Activated CD4-positive, alpha-beta T cell treated with anti-CD3 and anti-CD28 coated beads, Interleukin-2, amount 10 ng/mL, durations not matched to agents 7 days and 5 days (primary cell): ENCODE measurements at regions of chr1 and their contacts with region 1.

Region 1: DNA sequence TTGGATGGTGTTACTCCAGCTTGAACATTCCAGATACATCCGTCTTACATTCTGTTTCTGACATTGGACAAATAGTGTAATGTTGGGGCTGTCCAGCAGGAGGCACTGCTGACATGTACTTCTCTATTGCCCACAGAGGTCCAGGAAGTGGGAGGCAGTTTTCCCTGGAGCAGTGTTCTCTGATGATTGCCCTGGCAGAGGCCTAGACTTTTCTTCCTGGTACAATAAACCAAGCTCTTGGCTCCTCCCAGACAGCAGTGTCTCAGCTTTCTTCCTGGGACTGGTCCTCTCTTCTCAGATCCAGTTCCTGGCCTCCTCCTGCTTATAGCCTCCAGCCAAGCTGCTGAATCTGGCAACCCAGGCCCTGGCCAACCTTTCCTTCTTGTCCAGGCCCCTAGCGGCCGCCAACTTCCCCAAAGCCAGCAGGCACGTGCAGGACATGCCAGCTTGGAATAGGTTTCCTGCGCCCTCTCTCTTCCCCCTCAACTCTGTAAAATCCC is 14.9 kb upstream of the IFNLR1 start:
- DNase-seq: peak; percentile 68
- H3K4me3 Mint-ChIP-seq: no peak overlapping the region
- H3K27ac Mint-ChIP-seq: peak overlapping the region; percentile 75
- H3K4me1 Mint-ChIP-seq: peaks cover 10% of the 10 kb centered on the region
- H3K27me3 Mint-ChIP-seq: peaks cover 3% of the 10 kb centered on the region

Region 2: GRCh38 chr1:24150234-24151174 is 51.5 kb before region 1 on chr1:
- CTCF ChIA-PET with region 1: interaction called, 10 read pairs
- POLR2A ChIA-PET with region 1: no interaction called
- DNase-seq: peak; percentile 91
- H3K4me3 Mint-ChIP-seq: peak overlapping the region; percentile 33
- H3K27ac Mint-ChIP-seq: peak overlapping the region; percentile 6
- H3K4me1 Mint-ChIP-seq: peaks cover 20% of the 10 kb centered on the region
- H3K27me3 Mint-ChIP-seq: peaks cover 24% of the 10 kb centered on the region

Region 3: DNA sequence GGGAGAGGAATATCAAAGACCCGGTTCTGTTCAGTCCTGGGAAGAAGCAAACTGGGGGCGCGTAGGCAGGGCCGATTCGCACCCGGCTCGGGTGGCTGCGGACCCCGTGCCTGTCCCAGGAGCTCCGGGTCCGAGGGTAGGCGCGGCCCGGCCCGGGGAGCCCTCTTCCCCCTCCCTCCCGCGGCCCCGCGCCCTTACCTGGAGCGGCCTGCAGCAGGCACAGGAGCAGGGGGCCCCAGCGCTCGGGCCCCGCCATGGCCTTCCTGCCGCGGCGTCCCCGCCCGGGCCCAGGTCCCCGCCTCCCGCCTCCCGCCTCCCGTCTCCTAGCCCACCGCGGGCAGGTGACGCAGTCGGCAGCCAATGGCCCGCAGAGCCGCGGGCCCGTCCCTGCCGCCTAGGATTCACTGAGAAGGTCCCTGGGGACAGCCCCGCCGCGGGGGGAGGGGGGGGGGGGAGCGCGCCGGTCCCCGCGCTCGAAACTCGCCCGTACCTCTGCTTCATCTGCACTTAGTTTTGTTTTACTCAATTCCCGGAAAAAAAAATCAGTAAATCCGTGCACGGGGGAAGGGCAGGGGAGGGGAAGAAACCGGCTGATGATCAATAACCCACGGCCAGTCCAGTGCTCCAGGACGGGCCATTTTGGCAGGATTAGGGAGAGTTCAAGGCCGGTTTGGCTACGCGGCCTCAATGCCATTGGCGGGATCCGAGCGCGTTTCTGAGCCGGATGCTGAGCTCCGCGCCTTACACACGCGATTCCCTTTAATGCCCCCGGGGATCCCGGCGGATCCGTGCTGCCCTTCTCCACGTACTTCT is 14.8 kb before region 1 on chr1 and contains the start of gene IFNLR1:
- CTCF ChIA-PET with region 1: interaction called, 30 read pairs
- POLR2A ChIA-PET with region 1: no interaction called
- DNase-seq: peak; percentile 66
- H3K4me3 Mint-ChIP-seq: peak within 1 kb of the TSS; percentile 79
- H3K27ac Mint-ChIP-seq: peak within 1 kb of the TSS; percentile 84
- H3K4me1 Mint-ChIP-seq: peaks cover 56% of the 10 kb centered on the region
- H3K27me3 Mint-ChIP-seq: no peaks in the 10 kb centered on the region
- total RNA-seq, gene IFNLR1: 3.2 to 3.4 TPM

Region 4: DNA sequence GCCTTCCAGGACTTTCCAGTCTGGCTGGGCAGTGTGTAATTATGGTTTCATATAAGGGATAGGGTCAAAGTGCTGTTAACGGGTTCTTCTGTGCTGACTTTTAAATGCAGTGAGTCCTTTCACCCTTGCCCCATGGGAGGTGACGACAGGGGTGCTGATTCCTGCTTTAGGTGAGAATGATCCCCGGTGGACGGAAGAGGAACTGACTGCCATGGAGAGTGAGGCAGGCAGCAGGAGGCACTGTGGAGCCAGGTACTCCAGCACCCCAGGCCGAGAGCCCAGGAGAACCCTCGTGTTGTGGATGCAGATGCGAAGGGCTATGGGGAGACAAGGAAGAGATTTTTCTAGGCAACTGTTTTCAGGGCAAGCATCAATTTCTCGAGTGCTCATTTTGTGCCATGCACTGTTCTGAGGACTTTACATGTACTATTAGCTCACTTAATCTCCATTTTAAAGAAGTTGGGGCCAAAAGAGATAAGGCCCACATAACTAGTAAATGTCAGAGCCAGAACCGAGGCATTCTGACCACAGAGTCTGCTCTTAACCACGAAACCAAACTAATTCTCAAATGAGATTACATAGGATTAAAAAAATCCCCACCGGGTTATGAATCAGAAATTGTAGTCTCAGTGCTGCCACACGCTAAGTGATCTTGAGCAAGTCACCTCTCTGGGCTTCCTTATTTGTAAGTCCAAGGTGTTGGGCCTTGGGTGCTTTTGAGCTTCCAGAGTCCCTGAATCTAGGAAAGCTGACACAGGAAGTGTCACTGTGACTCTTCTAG is 183.4 kb after region 1 on chr1:
- CTCF ChIA-PET with region 1: interaction called, 216 read pairs
- POLR2A ChIA-PET with region 1: no interaction called
- DNase-seq: peak; percentile 40
- H3K4me3 Mint-ChIP-seq: no peak overlapping the region
- H3K27ac Mint-ChIP-seq: peak overlapping the region; percentile 78
- H3K4me1 Mint-ChIP-seq: peaks cover 35% of the 10 kb centered on the region
- H3K27me3 Mint-ChIP-seq: no peaks in the 10 kb centered on the region